B cell (primary cell): ENCODE measurements at regions of chr3 and their contacts with region 1.

Region 1: DNA sequence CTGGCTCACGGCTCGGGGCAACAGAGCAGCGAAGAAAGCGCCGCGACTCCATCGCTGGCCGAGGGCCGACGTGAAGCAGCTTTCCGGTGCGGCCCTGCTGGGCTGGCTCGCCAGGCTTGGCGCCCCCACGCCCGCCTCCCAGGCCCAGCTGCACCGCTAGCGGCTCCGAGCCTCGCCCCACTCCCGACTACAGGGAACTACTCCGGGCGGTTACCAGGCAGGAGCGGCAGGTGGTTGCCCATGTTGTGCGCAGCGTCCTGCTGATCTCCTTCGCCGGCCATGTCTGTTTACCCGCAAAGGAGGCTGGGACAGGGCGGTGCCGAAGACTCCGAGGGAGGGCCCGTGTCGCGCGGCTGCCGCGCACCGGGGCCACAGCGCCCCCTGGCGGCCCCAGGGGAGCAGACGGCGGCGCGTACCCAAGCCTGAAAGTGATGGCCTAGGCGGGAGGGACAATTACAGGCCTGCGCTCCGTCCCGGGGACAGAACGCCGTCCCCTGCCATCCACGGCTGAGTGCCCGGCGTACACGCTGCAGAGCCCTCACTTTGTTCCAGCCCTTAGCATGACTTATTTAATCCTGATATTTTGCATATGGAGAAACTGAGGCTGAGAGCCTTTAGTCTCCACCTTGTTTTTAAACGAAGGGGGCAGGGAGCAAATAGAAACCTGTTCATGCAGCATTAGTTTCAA is at the start of gene CRBN:
- DNase-seq: peak; percentile 92
- ATAC-seq: peak; percentile 98
- H3K4me3 ChIP-seq: peak within 1 kb of the TSS; percentile 62 to 95 (median 93)
- H3K4me3 Mint-ChIP-seq: peak within 1 kb of the TSS; percentile 98
- H3K27ac ChIP-seq: peak within 1 kb of the TSS; percentile 28 to 84
- H3K27ac Mint-ChIP-seq: peak within 1 kb of the TSS; percentile 86
- H3K4me1 ChIP-seq: peaks cover 18 to 19% of the 10 kb centered on the region in 2 donors
- H3K4me1 Mint-ChIP-seq: peaks cover 37% of the 10 kb centered on the region
- H3K27me3 ChIP-seq: peaks cover 0 to 6% (median 0%) of the 10 kb centered on the region in 4 experiments
- H3K27me3 Mint-ChIP-seq: peaks cover 14% of the 10 kb centered on the region
- CTCF ChIP-seq: peak; percentile 98
- total RNA-seq, gene CRBN: 92.6 and 95.1 TPM in 2 replicates

Region 2: DNA sequence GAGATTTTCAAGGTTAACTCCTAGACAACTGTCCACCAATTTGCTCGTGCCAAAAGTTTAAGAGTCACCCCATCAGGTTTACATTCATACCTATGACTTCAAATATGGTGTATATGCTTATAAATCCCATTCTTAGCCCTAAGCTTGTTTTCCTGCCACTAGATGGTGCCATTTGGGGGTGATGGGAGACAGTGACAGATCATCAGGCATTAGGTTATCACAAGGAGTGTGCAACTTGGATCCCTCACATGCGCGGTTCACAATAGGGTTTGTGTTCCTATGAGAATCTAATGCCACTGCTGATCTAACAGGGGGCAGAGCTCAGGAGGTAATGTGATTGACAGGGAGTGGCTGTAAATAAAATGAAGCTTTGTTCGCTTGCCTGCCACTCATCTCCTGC is 1904.1 kb before region 1 on chr3:
- CTCF ChIA-PET with region 1: no interaction called
- POLR2A ChIA-PET with region 1: no interaction called
- intact Hi-C with region 1: loop called (anchors 10 kb)
- DNase-seq: peak; percentile 18
- ATAC-seq: no peak
- H3K4me3 ChIP-seq: no peak overlapping the region
- H3K4me3 Mint-ChIP-seq: no peak overlapping the region
- H3K27ac ChIP-seq: no peak overlapping the region
- H3K27ac Mint-ChIP-seq: no peak overlapping the region
- H3K4me1 ChIP-seq: no peaks in the 10 kb centered on the region
- H3K4me1 Mint-ChIP-seq: no peaks in the 10 kb centered on the region
- H3K27me3 ChIP-seq: no peaks in the 10 kb centered on the region
- H3K27me3 Mint-ChIP-seq: no peaks in the 10 kb centered on the region
- CTCF ChIP-seq: peak; percentile 37

Region 3: GRCh38 chr3:3126477-3127431 is 52.8 kb before region 1 on chr3 and contains the start of gene TRNT1:
- CTCF ChIA-PET with region 1: no interaction called
- POLR2A ChIA-PET with region 1: no interaction called
- intact Hi-C with region 1: loop called (anchors 1 kb)
- DNase-seq: peak; percentile 97
- ATAC-seq: peak; percentile 97
- H3K4me3 ChIP-seq: peak within 1 kb of the TSS; percentile 72 to 97 (median 86)
- H3K4me3 Mint-ChIP-seq: peak within 1 kb of the TSS; percentile 97
- H3K27ac ChIP-seq: peak within 1 kb of the TSS; percentile 89 to 97
- H3K27ac Mint-ChIP-seq: peak within 1 kb of the TSS; percentile 97
- H3K4me1 ChIP-seq: peaks cover 15 to 24% of the 10 kb centered on the region in 2 donors
- H3K4me1 Mint-ChIP-seq: peaks cover 30% of the 10 kb centered on the region
- H3K27me3 ChIP-seq: no peaks in the 10 kb centered on the region
- H3K27me3 Mint-ChIP-seq: no peaks in the 10 kb centered on the region
- CTCF ChIP-seq: no peak
- total RNA-seq, gene TRNT1: 40.6 and 52.8 TPM in 2 replicates

Region 4: GRCh38 chr3:3200632-3201212 is 21.2 kb after region 1 on chr3:
- CTCF ChIA-PET with region 1: interaction called, 10 read pairs
- POLR2A ChIA-PET with region 1: no interaction called
- intact Hi-C with region 1: no loop called
- DNase-seq: peak; percentile 70
- ATAC-seq: peak; percentile 57
- H3K4me3 ChIP-seq: no peak overlapping the region
- H3K4me3 Mint-ChIP-seq: no peak overlapping the region
- H3K27ac ChIP-seq: no peak overlapping the region
- H3K27ac Mint-ChIP-seq: no peak overlapping the region
- H3K4me1 ChIP-seq: peaks cover 0 to 3% of the 10 kb centered on the region in 2 donors
- H3K4me1 Mint-ChIP-seq: peaks cover 8% of the 10 kb centered on the region
- H3K27me3 ChIP-seq: no peaks in the 10 kb centered on the region
- H3K27me3 Mint-ChIP-seq: peaks cover 9% of the 10 kb centered on the region
- CTCF ChIP-seq: peak; percentile 95

Region 5: GRCh38 chr3:3316521-3316920 is 137.0 kb after region 1 on chr3:
- CTCF ChIA-PET with region 1: no interaction called
- POLR2A ChIA-PET with region 1: no interaction called
- intact Hi-C with region 1: no loop called
- DNase-seq: no peak
- ATAC-seq: no peak
- H3K4me3 ChIP-seq: no peak overlapping the region
- H3K4me3 Mint-ChIP-seq: no peak overlapping the region
- H3K27ac ChIP-seq: no peak overlapping the region
- H3K27ac Mint-ChIP-seq: no peak overlapping the region
- H3K4me1 ChIP-seq: no peaks in the 10 kb centered on the region
- H3K4me1 Mint-ChIP-seq: no peaks in the 10 kb centered on the region
- H3K27me3 ChIP-seq: no peaks in the 10 kb centered on the region
- H3K27me3 Mint-ChIP-seq: no peaks in the 10 kb centered on the region
- CTCF ChIP-seq: no peak

Region 6: GRCh38 chr3:4303187-4304123 is 1123.9 kb after region 1 on chr3 and contains the start of gene SETMAR:
- CTCF ChIA-PET with region 1: interaction called, 5 read pairs
- POLR2A ChIA-PET with region 1: no interaction called
- intact Hi-C with region 1: loop called (anchors 1 kb)
- DNase-seq: peak; percentile 91
- ATAC-seq: peak; percentile 94
- H3K4me3 ChIP-seq: peak within 1 kb of the TSS; percentile 62 to 88 (median 85)
- H3K4me3 Mint-ChIP-seq: peak within 1 kb of the TSS; percentile 100
- H3K27ac ChIP-seq: peak within 1 kb of the TSS; percentile 64 to 79
- H3K27ac Mint-ChIP-seq: peak within 1 kb of the TSS; percentile 99
- H3K4me1 ChIP-seq: peaks cover 0 to 12% of the 10 kb centered on the region in 2 donors
- H3K4me1 Mint-ChIP-seq: peaks cover 16% of the 10 kb centered on the region
- H3K27me3 ChIP-seq: no peaks in the 10 kb centered on the region
- H3K27me3 Mint-ChIP-seq: no peaks in the 10 kb centered on the region
- CTCF ChIP-seq: no peak
- total RNA-seq, gene SETMAR: 6.8 and 7.6 TPM in 2 replicates

Region 7: DNA sequence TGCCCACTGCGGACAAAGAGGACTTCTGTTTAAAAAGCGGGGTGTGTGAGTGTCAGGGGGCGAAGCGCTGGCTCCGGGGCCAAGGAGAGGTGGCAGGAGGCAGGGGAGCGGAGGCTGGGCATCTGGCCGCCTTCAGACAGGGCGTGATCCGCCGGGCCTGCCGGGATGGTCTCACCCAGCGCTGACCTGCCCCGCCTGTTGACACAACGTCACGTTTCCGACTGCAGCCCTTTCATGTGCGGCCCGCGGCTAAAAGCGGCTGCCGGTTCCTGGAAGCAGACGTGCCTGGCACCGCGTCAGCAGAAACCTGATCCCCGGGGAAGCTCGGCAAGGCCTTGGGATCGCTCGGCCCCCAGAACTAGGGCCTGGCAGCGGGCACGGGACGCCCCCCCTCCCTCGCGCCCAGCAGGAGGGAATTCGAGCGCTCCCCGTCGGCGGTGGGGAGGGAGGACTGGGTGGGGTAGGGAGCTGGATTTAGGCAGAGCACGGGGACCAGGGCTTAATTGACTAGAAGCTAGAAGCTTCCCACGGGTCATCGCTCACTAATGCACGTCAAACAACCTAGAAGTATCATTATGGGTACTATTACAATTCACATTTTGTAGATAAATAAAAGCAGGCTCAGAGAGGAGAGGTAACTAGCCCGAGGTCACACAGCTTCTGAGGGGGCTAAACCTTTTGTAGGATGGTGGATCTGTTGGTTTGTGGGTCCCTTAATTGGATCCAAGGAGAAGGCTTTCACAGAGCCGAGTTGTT is 1807.4 kb after region 1 on chr3:
- CTCF ChIA-PET with region 1: no interaction called
- POLR2A ChIA-PET with region 1: no interaction called
- intact Hi-C with region 1: loop called (anchors 5 kb)
- DNase-seq: peak; percentile 77
- ATAC-seq: peak; percentile 42
- H3K4me3 ChIP-seq: peak overlapping the region; percentile 0 to 71 (median 68)
- H3K4me3 Mint-ChIP-seq: peak overlapping the region; percentile 90
- H3K27ac ChIP-seq: peak overlapping the region; percentile 86 to 92
- H3K27ac Mint-ChIP-seq: peak overlapping the region; percentile 94
- H3K4me1 ChIP-seq: peaks cover 57 to 65% of the 10 kb centered on the region in 2 donors
- H3K4me1 Mint-ChIP-seq: peaks cover 63% of the 10 kb centered on the region
- H3K27me3 ChIP-seq: no peaks in the 10 kb centered on the region
- H3K27me3 Mint-ChIP-seq: no peaks in the 10 kb centered on the region
- CTCF ChIP-seq: no peak